SK-N-SH (cell line): ENCODE measurements at regions of chr1 and their contacts with region 1.

Region 1: GRCh38 chr1:111222308-111223125 is 5.0 kb upstream of the CHI3L2 start:
- DNase-seq: peak; percentile 85
- H3K4me3 ChIP-seq: peak overlapping the region in 1 of 2 experiments; percentile 14; a peak in 1 of 4 replicates
- H3K27ac ChIP-seq: no peak overlapping the region
- H3K4me1 ChIP-seq: peaks cover 0 to 17% of the 10 kb centered on the region in 2 experiments; a peak in 3 of 4 replicates
- H3K27me3 ChIP-seq: no peaks in the 10 kb centered on the region
- CTCF ChIP-seq: peak; percentile 95
- EP300 ChIP-seq: no peak
- RAD21 ChIP-seq: peak; percentile 92

Region 2: GRCh38 chr1:111251570-111251969 is 29.1 kb after region 1 on chr1:
- CTCF ChIA-PET with region 1: interaction called, 15 read pairs
- POLR2A ChIA-PET with region 1: no interaction called
- DNase-seq: no peak
- H3K4me3 ChIP-seq: no peak overlapping the region
- H3K27ac ChIP-seq: no peak overlapping the region
- H3K4me1 ChIP-seq: no peaks in the 10 kb centered on the region; a peak in 1 of 4 replicates
- H3K27me3 ChIP-seq: peaks cover 12% of the 10 kb centered on the region; the same call in 1 of the 2 replicates
- CTCF ChIP-seq: no peak
- EP300 ChIP-seq: no peak
- RAD21 ChIP-seq: no peak